OCI-LY7 (cell line): ENCODE measurements at regions of chr12 and their contacts with region 1.

Region 1: DNA sequence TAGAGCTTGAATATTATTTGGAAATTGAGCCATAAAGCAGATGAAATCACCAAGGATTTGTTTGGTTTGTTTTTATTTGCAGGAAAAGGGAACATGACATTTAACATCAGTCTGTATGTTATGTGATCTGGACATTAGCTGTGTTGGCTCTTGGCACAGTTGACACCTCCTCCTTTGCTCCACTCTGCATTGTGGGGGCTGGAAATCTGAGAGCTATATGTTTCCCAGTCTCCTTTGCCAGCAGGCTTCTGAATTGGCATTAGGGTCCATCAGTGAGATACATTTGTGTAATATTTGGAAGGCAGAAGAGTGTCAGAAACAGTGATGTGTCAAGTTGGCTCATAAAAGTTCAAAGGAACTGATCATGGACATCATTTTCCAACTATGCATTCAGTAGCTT is 322.1 kb upstream of the ATP2B1 start:
- DNase-seq: no peak
- H3K4me3 ChIP-seq: no peak overlapping the region
- H3K27ac ChIP-seq: no peak overlapping the region
- H3K4me1 ChIP-seq: no peaks in the 10 kb centered on the region
- CTCF ChIP-seq: no peak

Region 2: GRCh38 chr12:89825591-89826449 is 204.9 kb before region 1 on chr12:
- CTCF ChIA-PET with region 1: no interaction called
- POLR2A ChIA-PET with region 1: no interaction called
- intact Hi-C with region 1: no loop called
- DNase-seq: peak; percentile 16
- H3K4me3 ChIP-seq: no peak overlapping the region
- H3K27ac ChIP-seq: no peak overlapping the region
- H3K4me1 ChIP-seq: peaks cover 23% of the 10 kb centered on the region
- CTCF ChIP-seq: peak; percentile 34; the same call in 1 of the 2 replicates

Region 3: GRCh38 chr12:89935825-89936224 is 94.9 kb before region 1 on chr12:
- CTCF ChIA-PET with region 1: no interaction called
- POLR2A ChIA-PET with region 1: no interaction called
- intact Hi-C with region 1: no loop called
- DNase-seq: no peak
- H3K4me3 ChIP-seq: no peak overlapping the region
- H3K27ac ChIP-seq: no peak overlapping the region
- H3K4me1 ChIP-seq: peaks cover 12% of the 10 kb centered on the region
- CTCF ChIP-seq: no peak

Region 4: GRCh38 chr12:90020014-90020413 is 10.7 kb before region 1 on chr12:
- CTCF ChIA-PET with region 1: no interaction called
- POLR2A ChIA-PET with region 1: interaction called, 23 read pairs
- intact Hi-C with region 1: no loop called
- DNase-seq: no peak
- H3K4me3 ChIP-seq: no peak overlapping the region
- H3K27ac ChIP-seq: no peak overlapping the region
- H3K4me1 ChIP-seq: no peaks in the 10 kb centered on the region
- CTCF ChIP-seq: no peak